H1 (cell line): ENCODE measurements at regions of chr3 and their contacts with region 1.

Region 1: GRCh38 chr3:114424337-114424736 is 130.5 kb downstream of the TIGIT start:
- DNase-seq: no peak
- H3K4me3 ChIP-seq: no peak overlapping the region
- H3K27ac ChIP-seq: no peak overlapping the region
- H3K4me1 ChIP-seq: peaks cover 0 to 9% (median 0%) of the 10 kb centered on the region in 4 experiments; a peak in 1 of 7 replicates
- H3K27me3 ChIP-seq: no peaks in the 10 kb centered on the region
- CTCF ChIP-seq: no peak
- EP300 ChIP-seq: no peak
- POLR2A ChIP-seq: no peak
- RAD21 ChIP-seq: no peak

Region 2: DNA sequence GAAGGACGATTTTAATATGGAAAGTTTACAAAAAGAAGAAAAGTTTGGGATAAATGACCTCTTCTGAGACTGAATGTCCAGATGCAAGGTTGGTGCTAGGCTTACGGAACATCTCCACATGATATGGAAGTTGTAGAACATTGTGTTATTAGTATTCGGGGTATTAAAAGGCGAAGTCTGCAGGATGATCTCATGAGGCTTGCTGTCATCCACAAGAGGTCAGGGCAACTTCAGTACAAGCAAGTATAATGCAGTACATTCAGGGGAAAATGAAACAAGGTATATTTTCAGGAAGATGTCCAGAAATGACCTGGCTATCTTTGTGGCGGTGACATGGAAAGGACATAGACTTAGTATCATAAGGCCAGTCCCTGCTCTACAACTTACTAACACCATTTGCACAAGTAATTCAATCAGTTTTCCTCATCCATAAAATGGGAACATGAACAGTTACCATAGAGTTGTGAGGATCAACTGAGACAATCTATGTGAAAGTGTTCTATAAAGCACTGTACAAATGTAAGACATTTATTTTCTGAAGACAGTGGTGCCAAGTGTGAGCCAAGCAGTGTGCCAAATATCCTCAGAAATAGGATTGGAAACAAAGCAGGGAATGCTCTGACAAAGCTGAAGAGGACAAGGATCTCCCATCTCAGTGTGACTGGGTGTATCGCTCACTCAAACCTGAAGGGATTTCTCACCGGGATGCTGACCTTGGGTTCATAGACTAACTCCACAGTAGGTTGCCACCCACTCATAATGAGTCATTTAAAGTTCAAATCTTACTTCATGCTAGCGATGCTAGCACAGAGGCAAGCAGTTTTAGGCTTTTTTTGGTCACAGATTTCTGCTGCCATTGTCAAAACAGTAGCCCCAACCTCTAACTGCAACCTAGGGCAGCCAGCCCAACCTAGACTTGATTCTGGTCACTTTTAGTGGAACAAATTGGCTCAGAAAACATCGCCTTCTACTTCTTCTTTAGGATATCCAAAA is 12.2 kb before region 1 on chr3:
- CTCF ChIA-PET with region 1: interaction called, 28 read pairs
- POLR2A ChIA-PET with region 1: no interaction called
- DNase-seq: no peak
- H3K4me3 ChIP-seq: no peak overlapping the region; a peak in 1 of 8 replicates
- H3K27ac ChIP-seq: no peak overlapping the region
- H3K4me1 ChIP-seq: peaks cover 1 to 25% (median 15%) of the 10 kb centered on the region in 4 experiments; a peak in 5 of 7 replicates
- H3K27me3 ChIP-seq: no peaks in the 10 kb centered on the region
- CTCF ChIP-seq: no peak
- EP300 ChIP-seq: no peak
- POLR2A ChIP-seq: no peak
- RAD21 ChIP-seq: no peak; a peak in 1 of 4 replicates